ENCODE measurements at regions of chr17 and their contacts with region 1.

Region 1: DNA sequence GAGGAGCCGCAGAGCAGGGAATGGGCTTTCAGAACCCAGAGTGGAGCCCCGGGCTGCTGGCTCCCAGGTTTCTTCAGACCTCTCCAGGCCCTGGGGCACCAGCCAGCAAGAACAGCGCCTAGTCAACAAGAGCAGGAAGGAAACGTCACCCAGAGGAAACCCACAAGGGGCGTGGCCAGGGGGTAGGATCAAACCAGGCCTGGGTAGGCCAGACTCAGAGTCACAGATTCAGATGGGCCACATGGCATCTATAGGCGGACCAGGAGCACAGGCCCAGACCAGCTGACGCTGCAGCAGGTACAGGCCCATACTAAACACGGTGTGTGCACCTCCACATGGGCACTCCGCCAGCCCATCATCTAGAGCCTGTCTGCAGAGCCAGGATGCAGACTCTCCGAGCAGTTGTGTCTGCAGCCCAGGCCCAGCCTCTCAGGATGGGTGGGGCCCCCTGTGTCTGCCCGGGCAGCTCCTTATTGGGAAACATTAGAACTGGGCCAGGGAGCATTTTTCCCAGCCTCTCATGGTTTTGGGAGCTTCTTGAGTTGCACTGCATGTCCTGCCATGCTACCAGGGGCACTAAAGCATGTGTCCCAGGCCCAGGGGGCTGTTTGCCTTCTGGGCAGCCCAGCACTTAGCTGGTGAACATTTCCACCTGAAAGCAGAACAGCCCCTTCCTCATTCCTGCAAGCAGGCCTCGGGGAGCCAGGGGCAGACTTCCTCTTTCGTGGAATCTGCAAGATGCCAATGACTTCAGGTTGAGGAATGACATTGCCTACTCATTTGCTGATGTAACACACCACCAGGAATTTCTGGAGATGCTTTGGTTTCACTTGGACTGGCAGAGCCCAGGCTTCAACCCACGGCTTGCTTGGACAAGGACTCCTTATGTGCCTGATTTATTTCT is at the start of gene NLRP1:
- DNase-seq: peak; percentile 96
- total RNA-seq, gene NLRP1: 11.7 TPM

Region 2: GRCh38 chr17:5706577-5707216 is 122.1 kb after region 1 on chr17:
- intact Hi-C with region 1: loop called (anchors 5 kb)
- DNase-seq: no peak

Region 3: DNA sequence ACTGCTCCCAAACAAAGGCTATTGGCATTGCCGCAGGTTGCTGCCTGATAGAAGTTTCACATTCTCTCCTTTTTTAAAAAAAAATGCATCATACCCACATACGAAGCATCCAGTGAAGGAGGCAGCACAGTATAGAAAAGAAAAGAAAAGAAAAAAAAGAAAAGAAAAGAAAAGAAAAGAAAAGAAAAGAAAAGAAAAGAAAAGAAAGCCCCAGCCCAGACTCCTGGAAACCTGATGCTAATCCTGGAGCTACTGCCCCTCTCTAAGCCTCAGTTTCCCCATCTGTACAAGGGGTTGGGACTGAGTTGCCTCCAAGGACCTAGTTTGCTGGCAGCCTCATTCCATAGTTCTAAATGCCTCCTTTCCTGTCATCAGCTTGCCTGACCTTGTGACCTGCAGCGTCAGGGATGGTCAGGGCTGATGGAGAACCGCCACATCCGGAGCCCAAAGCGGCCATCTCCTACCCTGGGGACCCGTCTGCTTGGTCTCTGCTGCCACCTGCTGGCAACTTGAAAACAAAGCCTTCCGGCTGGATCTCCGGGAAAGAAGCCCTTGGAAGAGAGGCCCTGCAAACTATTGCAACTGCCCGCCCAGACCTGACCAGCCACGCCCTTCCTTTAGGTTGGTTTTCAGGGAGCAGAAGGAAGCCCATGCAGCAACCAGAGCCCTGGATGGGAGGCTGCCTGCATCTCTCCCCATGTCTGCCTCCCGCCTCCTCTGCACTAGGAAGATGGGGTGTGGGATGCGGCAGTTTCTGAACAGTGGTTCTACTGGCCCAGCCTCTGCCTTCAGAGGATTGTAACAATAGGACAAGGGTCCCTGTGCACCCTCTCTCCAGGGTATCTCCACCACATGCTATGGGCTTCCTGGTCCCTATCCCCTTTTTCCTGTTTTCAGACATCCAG is 837.3 kb after region 1 on chr17:
- intact Hi-C with region 1: loop called (anchors 1 kb)
- DNase-seq: peak; percentile 90

Region 4: GRCh38 chr17:6435968-6436367 is 851.3 kb after region 1 on chr17:
- intact Hi-C with region 1: loop called (anchors 5 kb)
- DNase-seq: no peak